ENCODE measurements at regions of chr6 and their contacts with region 1.

Region 1: DNA sequence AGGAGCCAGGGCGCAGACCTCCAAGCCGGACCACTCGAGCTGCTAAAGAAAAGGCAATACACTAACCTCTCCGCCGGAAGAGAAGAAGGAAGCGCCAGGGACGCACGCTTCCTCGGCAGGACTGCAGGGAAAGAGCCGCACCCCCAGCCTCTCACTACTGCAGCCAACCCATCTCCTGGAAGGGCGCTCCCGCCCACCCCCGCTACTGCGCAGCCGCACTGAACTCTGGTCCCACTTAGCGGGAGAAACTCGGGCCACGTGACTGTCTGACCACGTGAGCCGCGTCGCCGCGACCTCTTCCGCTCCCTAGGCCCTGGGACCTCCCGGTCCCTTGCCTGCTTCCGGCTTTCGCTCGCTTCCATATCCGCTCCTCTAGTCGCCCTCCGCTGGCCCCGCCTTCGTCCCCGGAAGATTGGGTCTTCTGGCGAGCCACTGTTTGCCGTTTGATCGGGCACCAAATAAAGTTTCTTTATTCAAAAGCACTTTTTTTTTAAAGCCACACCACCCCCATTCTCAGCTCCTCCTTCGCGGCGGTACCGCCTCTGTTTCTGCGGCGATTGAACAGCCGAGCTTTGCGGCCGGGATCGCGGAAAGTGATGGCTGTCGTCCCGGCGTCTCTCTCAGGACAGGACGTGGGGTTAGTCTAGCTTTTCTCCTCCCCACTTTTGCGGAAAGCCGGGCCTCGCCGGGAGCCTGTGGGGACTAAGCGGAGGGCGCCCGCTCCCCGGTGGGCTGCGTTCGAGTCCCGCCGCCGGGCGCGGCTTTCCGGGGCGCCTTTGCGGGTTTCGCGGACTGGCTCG is at the start of gene RMND1:
- DNase-seq: peak; percentile 100
- ATAC-seq: peak; percentile 99
- total RNA-seq, gene RMND1: 18.5 TPM

Region 2: DNA sequence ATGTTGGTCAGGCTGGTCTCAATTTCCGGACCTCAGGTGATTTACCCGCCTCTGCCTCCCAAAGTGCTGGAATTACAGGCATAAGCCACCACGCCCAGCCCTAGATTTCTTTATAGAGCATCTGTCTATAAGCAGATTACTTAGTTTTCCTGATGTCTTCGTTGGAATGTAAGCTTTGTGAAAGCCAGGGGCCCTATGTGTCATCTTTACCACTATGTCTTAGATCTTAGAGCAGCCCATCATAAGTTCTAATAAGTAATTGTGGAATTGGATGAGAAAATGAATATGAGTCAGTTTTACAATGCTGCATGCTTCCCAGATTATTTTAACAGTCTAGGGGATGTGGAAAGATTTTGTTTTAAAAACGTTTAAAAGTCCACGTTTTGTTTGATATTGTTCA is 51.7 kb before region 1 on chr6:
- intact Hi-C with region 1: loop called (anchors 1 kb)
- DNase-seq: no peak
- ATAC-seq: no peak

Region 3: GRCh38 chr6:151440930-151441329 is 11.2 kb before region 1 on chr6:
- intact Hi-C with region 1: no loop called
- DNase-seq: no peak
- ATAC-seq: peak; percentile 48

Measured in sciatic nerve (tissue), 2 donors.